HEK293 (cell line): ENCODE measurements at regions of chr10 and their contacts with region 1.

Region 1: DNA sequence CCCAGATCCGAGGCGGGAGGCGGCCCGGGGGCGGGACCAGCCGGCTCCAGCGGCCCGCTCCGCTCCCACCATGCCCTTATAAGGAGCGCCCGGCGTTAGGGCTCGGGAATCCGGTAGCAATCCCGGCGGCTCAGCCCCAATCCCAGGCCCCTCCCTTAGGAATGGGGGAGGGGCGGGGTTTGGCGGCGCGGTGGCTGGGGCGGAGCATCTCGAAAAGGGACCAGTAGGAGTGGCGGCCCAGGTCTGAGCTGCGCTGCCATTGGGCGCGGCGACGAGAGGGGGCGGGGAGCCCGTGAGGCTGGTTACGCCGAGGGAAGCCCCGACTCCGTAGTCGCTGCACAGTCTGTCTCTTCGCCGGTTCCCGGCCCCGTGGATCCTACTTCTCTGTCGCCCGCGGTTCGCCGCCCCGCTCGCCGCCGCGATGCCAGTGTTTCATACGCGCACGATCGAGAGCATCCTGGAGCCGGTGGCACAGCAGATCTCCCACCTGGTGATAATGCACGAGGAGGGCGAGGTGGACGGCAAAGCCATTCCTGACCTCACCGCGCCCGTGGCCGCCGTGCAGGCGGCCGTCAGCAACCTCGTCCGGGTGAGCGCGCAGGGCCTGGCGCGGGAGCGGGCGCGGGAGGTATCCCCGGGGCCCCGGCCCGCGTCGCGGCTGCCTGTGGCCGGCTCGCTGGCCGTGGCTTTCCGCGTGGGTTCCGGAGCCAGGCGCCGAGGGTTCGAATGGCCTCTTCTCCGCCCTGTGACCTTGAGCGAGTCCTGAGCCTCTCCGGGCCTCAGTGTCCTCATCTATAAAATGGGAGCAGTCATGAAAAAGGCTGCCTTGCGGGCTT is at the start of gene VCL:
- H3K4me3 ChIP-seq: peak within 1 kb of the TSS; percentile 95
- H3K27ac ChIP-seq: peak within 1 kb of the TSS; percentile 83
- H3K4me1 ChIP-seq: peaks cover 4% of the 10 kb centered on the region; the same call in 1 of the 2 replicates
- CTCF ChIP-seq: no peak

Region 2: GRCh38 chr10:73965890-73966768 is 31.9 kb before region 1 on chr10:
- CTCF ChIA-PET with region 1: interaction called, 10 read pairs
- POLR2A ChIA-PET with region 1: interaction called, 12 read pairs
- H3K4me3 ChIP-seq: peak overlapping the region; percentile 2
- H3K27ac ChIP-seq: peak overlapping the region; percentile 90
- H3K4me1 ChIP-seq: peaks cover 14% of the 10 kb centered on the region
- CTCF ChIP-seq: no peak

Region 3: GRCh38 chr10:74011770-74012169 is 13.8 kb after region 1 on chr10:
- CTCF ChIA-PET with region 1: interaction called, 5 read pairs
- POLR2A ChIA-PET with region 1: interaction called, 22 read pairs
- H3K4me3 ChIP-seq: no peak overlapping the region
- H3K27ac ChIP-seq: peak overlapping the region; percentile 58
- H3K4me1 ChIP-seq: peaks cover 44% of the 10 kb centered on the region
- CTCF ChIP-seq: no peak

Region 4: DNA sequence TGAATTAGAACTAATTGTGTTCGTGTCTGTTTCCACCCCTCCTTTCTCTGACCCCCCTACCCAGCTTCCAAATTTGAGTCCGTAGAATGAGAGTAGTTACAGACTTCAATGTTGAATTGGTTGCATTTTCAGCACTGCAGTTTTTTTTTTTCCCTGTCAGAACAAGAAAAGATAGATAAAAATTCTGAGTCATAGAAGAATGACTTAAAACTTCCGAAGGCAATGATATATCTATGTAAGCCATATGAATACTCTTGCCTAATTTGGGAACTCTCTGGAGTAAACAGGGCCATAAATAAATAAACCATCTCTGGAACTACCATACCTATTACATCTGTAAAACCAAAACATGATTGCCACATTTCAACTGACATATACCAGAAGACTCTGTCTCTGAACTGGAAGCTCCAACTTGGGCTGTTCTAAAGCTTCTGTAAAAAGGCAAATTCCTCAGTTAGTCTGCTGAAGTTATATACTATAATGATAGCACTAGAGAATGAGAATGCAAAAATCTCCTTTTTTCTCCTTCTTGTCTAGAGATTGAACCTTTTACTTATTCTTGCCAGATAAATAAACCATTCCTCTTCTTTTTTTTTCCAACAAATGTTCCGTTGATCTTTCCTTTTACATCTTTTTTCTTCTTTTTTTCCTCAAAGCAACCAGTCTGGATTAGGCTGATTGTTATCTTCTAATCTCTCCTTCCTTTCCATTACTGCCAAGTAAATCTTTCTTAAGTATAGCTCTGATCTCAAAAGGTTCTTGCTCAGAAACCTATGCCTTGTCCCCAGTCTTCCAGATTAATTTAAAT is 23.4 kb after region 1 on chr10:
- CTCF ChIA-PET with region 1: interaction called, 11 read pairs
- POLR2A ChIA-PET with region 1: interaction called, 14 read pairs
- H3K4me3 ChIP-seq: no peak overlapping the region
- H3K27ac ChIP-seq: peak overlapping the region; percentile 32; the same call in 1 of the 2 replicates
- H3K4me1 ChIP-seq: peaks cover 14% of the 10 kb centered on the region
- CTCF ChIP-seq: no peak

Region 5: GRCh38 chr10:74026428-74027015 is 28.5 kb after region 1 on chr10:
- CTCF ChIA-PET with region 1: interaction called, 11 read pairs
- POLR2A ChIA-PET with region 1: interaction called, 14 read pairs
- H3K4me3 ChIP-seq: no peak overlapping the region
- H3K27ac ChIP-seq: no peak overlapping the region
- H3K4me1 ChIP-seq: peaks cover 14% of the 10 kb centered on the region
- CTCF ChIP-seq: no peak